ENCODE measurements at regions of chr3 and their contacts with region 1.

Region 1: DNA sequence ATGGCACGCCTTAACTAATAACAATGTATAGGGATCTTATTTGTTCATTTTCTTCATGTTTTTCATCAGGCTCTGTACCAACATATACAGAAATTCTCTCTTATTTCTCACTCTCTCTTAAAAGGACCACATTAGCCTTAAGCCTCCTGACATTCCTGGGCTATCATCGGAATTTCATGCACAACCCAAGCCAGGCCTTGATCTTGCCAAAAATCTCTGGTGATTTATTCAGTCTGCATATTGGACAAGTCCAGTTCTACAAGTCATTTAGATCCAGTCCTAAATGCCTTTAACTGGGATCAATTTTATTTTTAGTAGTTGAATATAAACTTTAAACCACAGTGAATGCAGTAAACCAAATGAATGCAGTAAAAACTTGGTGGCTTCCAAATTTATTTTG is 385.4 kb downstream of the MECOM start:
- DNase-seq: no peak
- ATAC-seq: no peak
- H3K4me3 ChIP-seq: no peak overlapping the region
- H3K27ac ChIP-seq: no peak overlapping the region
- H3K4me1 ChIP-seq: peaks cover 29% of the 10 kb centered on the region
- H3K27me3 ChIP-seq: no peaks in the 10 kb centered on the region
- CTCF ChIP-seq: no peak

Region 2: DNA sequence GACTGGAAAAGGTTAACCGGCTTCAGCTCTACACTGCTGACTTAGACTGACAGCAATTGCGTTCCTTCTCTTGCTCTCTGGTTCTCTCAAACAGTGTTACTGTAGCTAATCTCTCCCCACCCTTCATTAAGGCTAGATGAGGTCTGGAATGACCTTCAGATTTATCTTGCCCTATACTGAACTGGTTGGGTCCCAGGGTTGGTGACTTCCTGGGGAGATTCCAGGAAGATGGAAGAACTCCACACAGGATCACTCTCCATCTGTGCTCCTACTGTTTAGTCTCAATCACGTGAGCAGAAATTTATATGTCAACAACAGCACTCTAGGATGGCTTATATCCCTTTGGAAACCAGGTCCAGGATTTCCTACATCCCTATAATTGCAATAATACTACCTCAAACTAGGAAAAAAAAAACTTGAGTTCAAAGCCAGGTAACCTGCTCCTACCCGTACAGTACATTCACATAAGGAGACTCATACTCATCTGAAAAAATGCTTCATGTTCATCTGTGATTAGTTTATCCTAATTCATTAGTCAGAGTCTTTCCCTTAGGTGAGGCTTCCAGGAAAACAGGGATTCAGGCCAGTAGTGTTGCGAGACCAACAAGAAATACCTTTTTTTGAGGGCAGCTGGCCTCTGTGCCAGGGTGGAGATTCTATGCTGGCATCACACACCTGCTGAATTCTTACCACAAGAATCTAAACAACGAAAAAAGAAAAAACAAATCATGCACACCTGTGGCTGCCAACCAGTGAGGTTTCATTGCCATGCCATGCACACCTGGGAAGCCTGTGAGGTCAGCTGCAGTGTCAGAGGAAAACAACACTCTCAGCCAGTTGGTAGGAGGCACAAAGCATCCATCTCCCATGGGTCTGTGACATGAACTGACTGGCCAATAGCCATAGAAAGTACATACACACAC is 88.2 kb after region 1 on chr3:
- CTCF ChIA-PET with region 1: no interaction called
- POLR2A ChIA-PET with region 1: no interaction called
- intact Hi-C with region 1: no loop called
- DNase-seq: no peak
- ATAC-seq: no peak
- H3K4me3 ChIP-seq: no peak overlapping the region
- H3K27ac ChIP-seq: no peak overlapping the region
- H3K4me1 ChIP-seq: no peaks in the 10 kb centered on the region
- H3K27me3 ChIP-seq: no peaks in the 10 kb centered on the region
- CTCF ChIP-seq: no peak

Region 3: DNA sequence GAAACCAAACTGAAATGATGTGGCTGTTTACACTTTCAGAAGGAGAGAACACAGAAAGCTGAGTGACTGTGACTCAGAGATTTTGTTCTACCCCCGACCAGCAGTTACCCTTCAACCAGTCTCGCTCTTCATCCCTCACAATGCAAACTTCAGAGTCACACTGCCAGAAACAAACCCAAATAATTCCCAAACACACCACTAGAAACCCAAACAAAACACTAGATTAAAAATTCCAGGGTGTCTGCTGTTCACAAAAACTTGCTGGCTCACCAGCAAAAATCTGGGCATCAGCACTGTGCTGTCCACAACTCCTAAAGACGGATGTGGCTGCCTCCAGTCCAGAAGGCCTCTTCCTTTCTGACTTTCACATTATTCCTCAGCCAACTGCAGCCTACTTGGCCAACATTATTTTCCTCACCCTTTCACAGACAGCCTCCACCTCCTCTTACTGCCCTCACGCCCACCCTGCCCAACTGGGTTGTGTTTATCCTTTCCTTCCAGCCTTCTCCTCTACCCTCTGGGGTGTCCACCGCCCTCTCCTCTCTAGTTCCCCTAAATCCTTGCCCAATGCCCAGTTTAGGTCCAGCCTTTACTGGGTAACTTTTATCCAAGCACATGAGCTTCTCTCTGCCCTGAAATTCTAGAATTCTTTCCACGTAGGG is 314.0 kb after region 1 on chr3:
- CTCF ChIA-PET with region 1: no interaction called
- POLR2A ChIA-PET with region 1: interaction called, 13 read pairs
- intact Hi-C with region 1: no loop called
- DNase-seq: no peak
- ATAC-seq: peak; percentile 77
- H3K4me3 ChIP-seq: no peak overlapping the region
- H3K27ac ChIP-seq: no peak overlapping the region
- H3K4me1 ChIP-seq: peaks cover 15% of the 10 kb centered on the region
- H3K27me3 ChIP-seq: no peaks in the 10 kb centered on the region
- CTCF ChIP-seq: no peak